ENCODE measurements at regions of chr1 and their contacts with region 1.

Region 1: DNA sequence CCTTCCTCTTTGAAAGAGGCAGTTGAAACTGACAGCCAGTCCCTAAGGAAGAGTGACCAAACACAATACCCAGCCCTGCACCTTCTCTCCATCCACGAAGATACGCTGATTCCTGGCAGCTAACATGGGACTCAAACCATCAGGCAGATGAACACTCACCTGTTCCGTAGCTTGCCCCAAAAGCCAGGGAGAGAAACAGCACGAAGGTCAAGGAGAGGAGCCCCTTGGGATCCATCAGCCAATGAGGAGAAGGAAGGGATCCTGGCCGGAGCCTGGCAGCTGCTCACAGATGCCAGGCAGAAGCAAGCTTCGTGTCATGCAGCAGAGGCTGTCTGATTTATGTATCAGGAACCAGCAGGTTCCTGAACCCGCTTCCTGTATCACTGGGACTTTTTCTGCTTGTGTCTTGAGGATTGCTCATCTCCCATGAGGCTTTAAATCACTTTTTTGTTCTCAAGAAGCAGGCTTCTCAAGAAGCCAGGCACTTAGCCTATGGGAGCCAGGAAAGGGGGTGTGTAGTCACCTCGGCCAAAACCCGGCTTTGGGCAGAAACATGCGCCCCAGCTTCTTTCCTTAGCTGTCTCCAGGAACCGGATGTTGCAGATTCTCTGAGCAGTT is at the start of gene SLAMF1:
- DNase-seq: peak; percentile 81
- ATAC-seq: peak; percentile 81
- H3K4me3 Mint-ChIP-seq: peak within 1 kb of the TSS; percentile 93
- H3K27ac Mint-ChIP-seq: peak within 1 kb of the TSS; percentile 92
- H3K4me1 Mint-ChIP-seq: peaks cover 56% of the 10 kb centered on the region
- H3K27me3 Mint-ChIP-seq: no peaks in the 10 kb centered on the region
- total RNA-seq, gene SLAMF1: 103 to 108 TPM

Region 2: DNA sequence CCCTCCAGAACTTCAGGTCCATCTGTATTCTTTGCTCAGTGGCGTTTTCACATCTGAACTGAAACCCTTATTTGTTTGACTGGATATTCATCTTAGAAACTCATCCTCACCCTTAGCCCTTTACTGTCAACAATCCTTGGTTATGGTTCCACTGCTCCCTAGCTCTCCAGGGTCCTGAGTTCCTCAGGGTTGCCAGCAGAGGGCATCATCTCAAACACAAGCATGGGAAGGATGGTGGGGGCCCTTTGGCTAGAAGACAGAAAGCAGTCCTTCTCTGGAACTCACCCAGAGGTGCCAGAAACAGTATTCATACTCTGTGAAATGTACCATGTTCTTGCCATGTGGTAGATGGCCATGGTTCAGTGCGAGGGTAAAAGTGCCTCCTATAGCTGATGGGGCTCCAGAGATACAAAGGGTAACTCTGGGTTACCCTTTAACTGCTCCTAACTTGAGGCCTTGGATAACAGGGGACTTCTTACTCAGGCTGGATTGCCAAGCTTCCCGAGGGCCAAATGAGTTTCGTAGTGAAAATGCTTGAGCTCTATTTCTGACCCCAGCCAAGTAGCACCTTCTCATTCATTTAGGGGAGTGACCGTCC is 292.3 kb before region 1 on chr1:
- CTCF ChIA-PET with region 1: no interaction called
- POLR2A ChIA-PET with region 1: no interaction called
- intact Hi-C with region 1: no loop called
- DNase-seq: peak; percentile 47
- ATAC-seq: peak; percentile 74
- H3K4me3 Mint-ChIP-seq: no peak overlapping the region
- H3K27ac Mint-ChIP-seq: no peak overlapping the region
- H3K4me1 Mint-ChIP-seq: no peaks in the 10 kb centered on the region
- H3K27me3 Mint-ChIP-seq: no peaks in the 10 kb centered on the region

Region 3: DNA sequence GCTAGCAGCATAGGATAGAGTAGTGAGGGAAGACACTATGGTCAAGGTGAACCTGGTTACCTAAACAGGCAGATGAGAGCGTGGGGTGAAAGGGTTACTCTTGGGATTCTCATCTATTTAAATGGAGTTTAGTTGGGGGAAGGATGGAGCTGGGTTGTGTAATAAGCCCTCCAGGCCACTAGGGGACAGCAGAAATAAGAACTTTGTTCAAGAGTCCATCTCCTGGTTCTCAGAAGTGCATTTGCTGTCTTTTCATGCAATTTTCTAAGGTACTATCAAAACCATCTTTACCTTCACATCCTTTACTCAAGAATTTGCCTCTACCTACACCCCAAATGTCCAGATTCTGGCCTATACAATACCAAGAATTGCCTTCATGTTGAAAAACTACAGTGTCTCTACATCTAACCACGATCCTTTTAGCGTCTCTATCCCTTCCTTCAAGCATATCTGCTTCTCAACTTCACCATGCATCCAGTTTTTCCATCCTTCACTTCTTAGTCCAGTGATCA is 28.0 kb before region 1 on chr1:
- CTCF ChIA-PET with region 1: interaction called, 9 read pairs
- POLR2A ChIA-PET with region 1: interaction called, 11 read pairs
- intact Hi-C with region 1: loop called in 1 of 2 experiments (anchors 5 kb)
- DNase-seq: peak; percentile 65
- ATAC-seq: no peak
- H3K4me3 Mint-ChIP-seq: no peak overlapping the region
- H3K27ac Mint-ChIP-seq: peak overlapping the region; percentile 71
- H3K4me1 Mint-ChIP-seq: peaks cover 60% of the 10 kb centered on the region
- H3K27me3 Mint-ChIP-seq: no peaks in the 10 kb centered on the region

Region 4: DNA sequence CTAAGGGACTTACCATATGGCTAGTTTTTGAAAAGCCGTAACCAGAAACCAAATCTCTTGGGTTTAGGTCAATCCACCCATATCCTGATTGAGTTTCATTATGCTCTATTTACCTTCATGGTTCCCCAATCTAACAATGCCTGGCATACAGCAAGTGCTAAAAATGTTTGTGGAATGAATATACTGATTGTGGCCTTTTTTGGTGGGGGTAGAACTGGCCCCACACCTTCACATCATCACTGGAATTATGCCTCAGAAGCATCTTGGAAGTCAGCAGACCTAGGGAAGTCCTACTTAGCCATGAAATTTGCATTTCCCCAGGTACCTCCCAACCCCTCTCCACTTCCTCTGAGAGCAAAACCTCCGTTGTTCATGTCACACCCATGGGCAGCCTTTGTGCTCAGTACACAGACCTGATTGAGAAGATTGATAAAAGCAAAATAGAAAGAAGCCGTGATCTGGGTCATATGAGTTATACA is 17.8 kb after region 1 on chr1:
- CTCF ChIA-PET with region 1: interaction called, 8 read pairs
- POLR2A ChIA-PET with region 1: interaction called, 3 read pairs
- intact Hi-C with region 1: loop called in 1 of 2 experiments (anchors 2 kb)
- DNase-seq: peak; percentile 55
- ATAC-seq: peak; percentile 79
- H3K4me3 Mint-ChIP-seq: peak overlapping the region; percentile 40
- H3K27ac Mint-ChIP-seq: peak overlapping the region; percentile 89
- H3K4me1 Mint-ChIP-seq: peaks cover 70% of the 10 kb centered on the region
- H3K27me3 Mint-ChIP-seq: no peaks in the 10 kb centered on the region

Region 5: GRCh38 chr1:160711602-160712311 is 64.9 kb after region 1 on chr1 and contains the start of gene CD48:
- CTCF ChIA-PET with region 1: interaction called, 4 read pairs
- POLR2A ChIA-PET with region 1: no interaction called
- intact Hi-C with region 1: loop called in 1 of 2 experiments (anchors 2 kb)
- DNase-seq: peak; percentile 70
- ATAC-seq: peak; percentile 40
- H3K4me3 Mint-ChIP-seq: no peak within 1 kb of the TSS
- H3K27ac Mint-ChIP-seq: no peak within 1 kb of the TSS
- H3K4me1 Mint-ChIP-seq: peaks cover 34% of the 10 kb centered on the region
- H3K27me3 Mint-ChIP-seq: no peaks in the 10 kb centered on the region
- total RNA-seq, gene CD48: 180 to 217 TPM

Measured in activated CD4-positive, alpha-beta T cell treated with anti-CD3 and anti-CD28 coated beads for 36 hours (primary cell).